Posterior cingulate gyrus (tissue), 11 donors: ENCODE measurements at regions of chr18 and their contacts with region 1.

Region 1: GRCh38 chr18:36284671-36285295 is 12.7 kb upstream of the FHOD3 start:
- DNase-seq: peak in 3 of 10 donors; percentile 31 to 41 (median 40)

Region 2: DNA sequence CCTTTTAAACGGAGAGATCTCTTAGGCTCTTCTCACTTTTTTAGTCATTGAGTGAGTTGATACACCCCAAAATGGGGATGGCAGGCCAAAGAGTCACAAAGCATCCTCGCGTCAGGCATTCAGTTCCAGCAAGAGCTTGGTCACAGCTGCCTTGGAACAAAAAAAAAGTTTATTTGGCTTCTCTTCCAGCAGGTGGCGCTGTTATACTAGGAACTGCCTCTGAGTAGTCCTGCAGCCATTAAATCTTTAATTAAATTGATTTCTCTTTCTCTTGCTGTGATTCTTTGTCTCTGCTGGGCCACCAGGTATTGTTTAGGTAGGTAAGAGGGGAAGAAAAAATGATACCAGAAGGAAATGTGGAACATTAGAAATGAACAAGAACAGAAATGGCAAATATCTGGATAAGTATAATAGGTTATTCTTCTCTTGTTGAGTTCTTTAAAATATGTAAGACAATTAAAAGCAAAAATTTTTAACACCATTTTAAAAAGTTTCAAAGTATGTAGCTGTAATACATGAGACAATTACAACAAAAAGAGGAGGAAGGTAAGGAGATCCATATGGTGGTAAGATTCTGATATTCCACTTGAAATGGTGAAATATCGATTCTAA is 528.2 kb before region 1 on chr18:
- intact Hi-C with region 1: loop called (anchors 1 kb)
- DNase-seq: peak in 6 of 10 donors; percentile 17 to 87 (median 57)

Region 3: GRCh38 chr18:36015629-36016028 is 269.2 kb before region 1 on chr18:
- intact Hi-C with region 1: loop called (anchors 1 kb)
- DNase-seq: no peak

Region 4: DNA sequence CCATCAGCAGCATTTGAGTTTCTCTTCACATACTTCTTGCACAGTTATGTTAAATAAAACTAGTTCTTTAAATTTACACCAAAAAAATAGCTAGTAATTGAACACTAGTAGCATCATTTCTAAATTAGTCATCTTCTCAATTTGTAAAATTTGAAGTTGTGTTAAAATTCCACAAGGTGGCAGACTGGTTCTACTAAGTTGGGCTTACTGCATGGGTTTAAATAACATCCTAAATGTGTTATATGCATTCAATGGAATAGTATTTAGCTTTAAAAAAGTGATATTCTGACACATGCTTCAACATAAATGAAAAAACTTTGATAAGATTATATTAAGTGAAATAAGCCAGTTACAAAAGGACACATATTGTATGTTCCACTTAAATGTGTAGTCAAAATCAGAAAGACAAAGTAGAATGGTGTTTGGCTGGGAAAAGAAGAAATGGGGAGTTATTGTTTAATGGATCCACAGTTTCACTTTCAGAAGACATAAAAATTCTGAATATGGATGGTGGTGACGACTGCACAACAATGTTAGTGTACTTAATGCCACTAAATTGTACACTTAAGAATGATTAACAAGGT is 188.8 kb before region 1 on chr18:
- intact Hi-C with region 1: loop called (anchors 1 kb)
- DNase-seq: no peak

Region 5: DNA sequence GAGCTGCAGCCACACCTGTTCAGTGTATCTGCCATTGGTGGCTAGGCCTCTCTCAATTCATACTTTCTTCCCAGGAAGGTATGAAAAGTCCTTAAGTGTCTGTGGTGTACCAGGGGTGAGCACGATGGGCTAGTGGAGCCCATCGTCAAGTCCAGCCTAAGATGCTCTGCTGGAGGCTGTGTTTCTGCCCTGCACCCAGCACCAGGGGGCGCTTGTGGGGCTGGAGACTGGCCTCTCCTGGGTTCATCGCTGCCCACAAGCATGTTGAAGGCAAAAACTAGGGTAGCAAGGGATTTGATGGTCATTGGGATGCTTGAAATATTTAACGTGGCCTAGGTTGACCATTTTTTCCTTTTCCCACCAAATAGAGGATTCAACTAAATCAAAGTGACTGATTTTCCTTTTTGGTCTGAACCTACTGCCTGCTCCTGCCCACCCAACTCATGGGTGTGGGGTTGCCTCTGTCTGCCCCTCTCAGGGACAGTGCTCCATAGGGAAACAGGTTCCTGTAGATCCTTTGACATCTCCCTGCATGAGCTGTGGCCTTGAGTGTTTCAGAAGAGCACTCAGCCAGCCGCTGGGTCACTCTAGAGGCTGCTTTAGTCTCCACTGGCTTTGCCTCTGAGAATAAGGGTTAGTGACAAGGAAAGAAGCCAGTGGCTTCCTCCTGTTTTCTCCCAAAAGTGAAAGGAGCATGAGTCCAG is 485.0 kb after region 1 on chr18:
- intact Hi-C with region 1: no loop called
- DNase-seq: peak in 1 of 10 donors; percentile 66